OCI-LY7 (cell line): ENCODE measurements at regions of chr9 and their contacts with region 1.

Region 1: DNA sequence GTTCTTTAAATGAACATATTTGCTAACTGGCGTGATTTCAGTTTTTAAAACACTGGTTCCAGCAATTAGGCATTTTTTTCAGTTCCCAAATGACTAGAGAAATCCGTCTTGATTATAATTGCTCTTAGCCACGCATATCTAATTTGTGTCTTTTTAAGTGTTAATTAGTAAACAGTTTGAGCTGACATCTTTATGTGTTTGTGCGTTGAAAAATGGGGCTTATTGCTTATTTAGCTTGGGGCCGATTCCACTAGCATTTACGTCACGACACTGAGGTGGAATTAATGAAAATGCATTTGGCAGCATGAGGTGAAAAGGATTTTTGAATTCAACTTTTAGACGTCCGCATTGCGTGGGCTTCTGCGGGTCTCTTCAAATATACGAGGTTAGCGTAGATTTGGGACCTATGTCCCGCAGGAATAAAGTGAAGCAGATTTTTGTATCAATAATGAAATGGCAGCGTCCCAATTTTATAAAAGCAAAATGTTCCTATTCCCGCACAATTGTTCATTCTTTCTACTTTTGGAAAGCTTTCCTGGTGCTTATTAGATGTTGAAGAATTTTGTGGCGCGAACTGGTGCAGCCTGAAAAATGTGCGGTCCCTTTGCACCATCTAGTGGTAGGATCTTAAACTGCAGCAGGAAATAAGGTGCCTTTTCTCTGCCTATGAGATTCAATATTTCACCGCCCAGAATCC is 122.7 kb upstream of the LMX1B start:
- DNase-seq: peak; percentile 64
- H3K4me3 ChIP-seq: no peak overlapping the region
- H3K27ac ChIP-seq: no peak overlapping the region
- H3K4me1 ChIP-seq: no peaks in the 10 kb centered on the region
- CTCF ChIP-seq: peak; percentile 99

Region 2: DNA sequence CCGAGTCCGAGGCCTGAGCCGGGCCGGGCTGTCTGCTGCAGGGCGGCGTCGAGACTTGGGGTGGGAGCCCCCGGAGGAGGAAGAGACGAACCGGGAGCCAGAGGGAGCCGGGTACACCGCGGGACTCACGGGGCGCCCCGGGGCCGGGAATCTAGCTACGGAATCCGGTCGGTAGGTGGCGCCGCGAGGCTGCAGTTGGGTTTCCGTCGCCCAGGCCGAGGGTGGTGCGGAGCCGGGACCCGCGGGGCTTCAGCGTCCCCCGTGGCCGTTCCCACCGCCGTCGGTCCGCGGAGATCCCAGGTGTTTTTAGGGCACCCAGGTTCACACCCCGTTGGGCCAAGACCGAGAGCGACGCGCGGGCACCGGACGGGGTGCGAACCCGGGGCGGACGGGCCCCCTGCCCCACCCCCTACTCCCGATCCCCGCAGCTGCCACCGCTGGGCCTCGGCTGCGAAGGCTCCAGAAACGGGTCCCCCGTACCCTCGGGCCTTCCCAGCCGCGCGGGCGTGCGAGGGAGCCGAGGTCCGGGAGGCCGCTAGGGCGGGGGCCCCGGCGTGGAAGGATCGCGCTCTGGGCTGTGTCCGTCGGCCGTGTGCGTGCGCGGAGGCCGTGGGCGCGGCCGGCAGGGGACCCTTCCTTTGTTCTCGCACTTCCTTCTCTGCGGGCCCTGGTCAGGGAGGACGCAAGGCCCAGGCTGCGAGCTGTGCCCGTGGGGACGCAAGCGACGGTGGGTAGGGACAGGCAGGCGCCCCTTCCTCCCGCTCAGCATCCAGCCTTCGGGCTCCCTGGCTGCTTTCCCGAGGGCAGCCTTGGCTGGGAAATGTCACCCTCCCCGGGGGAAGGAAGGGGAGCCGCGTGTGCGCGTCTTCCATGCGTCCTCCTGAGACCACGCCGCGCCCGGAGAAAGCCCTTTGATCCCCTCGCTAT is 1082.8 kb before region 1 on chr9:
- CTCF ChIA-PET with region 1: no interaction called
- POLR2A ChIA-PET with region 1: no interaction called
- intact Hi-C with region 1: loop called (anchors 5 kb)
- DNase-seq: peak; percentile 84
- H3K4me3 ChIP-seq: peak overlapping the region; percentile 60
- H3K27ac ChIP-seq: no peak overlapping the region
- H3K4me1 ChIP-seq: peaks cover 21% of the 10 kb centered on the region
- CTCF ChIP-seq: peak; percentile 83

Region 3: DNA sequence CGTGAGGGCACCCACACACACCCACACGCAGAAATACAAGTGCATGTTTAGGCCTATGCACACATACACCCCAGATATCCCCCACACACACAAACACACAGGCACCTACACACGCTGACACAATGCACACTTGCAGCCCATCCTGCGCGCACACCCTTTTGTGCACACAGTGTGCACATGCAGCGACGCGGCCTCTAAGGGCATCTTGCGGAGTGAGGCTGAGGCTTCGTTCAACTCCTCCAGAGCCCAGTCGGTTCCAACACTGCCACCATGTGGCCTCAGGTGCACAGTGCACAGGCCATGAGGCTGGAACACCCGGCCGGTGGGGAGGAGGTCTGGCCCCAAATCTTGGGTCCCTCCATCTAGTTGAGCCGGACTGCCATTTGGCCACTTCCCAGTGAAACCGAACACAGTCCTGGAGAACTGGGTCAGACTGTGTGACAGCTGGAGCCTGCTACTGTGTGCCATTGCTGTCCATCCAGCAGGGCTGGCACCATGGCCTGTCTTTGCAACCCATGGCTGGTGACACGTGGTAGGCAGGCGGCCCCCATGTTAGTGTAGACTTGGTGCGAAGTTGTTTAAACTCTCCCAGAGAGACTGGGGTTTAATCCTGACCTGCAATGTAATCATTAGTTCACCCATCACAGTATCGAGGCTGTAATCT is 262.1 kb before region 1 on chr9:
- CTCF ChIA-PET with region 1: no interaction called
- POLR2A ChIA-PET with region 1: no interaction called
- intact Hi-C with region 1: loop called (anchors 5 kb)
- DNase-seq: peak; percentile 55
- H3K4me3 ChIP-seq: no peak overlapping the region
- H3K27ac ChIP-seq: no peak overlapping the region
- H3K4me1 ChIP-seq: no peaks in the 10 kb centered on the region
- CTCF ChIP-seq: peak; percentile 88

Region 4: GRCh38 chr9:126301985-126302603 is 188.9 kb before region 1 on chr9:
- CTCF ChIA-PET with region 1: no interaction called
- POLR2A ChIA-PET with region 1: no interaction called
- intact Hi-C with region 1: loop called (anchors 2 kb)
- DNase-seq: peak; percentile 44
- H3K4me3 ChIP-seq: no peak overlapping the region
- H3K27ac ChIP-seq: no peak overlapping the region
- H3K4me1 ChIP-seq: no peaks in the 10 kb centered on the region
- CTCF ChIP-seq: peak; percentile 78

Region 5: GRCh38 chr9:126317513-126317912 is 173.5 kb before region 1 on chr9:
- CTCF ChIA-PET with region 1: no interaction called
- POLR2A ChIA-PET with region 1: no interaction called
- intact Hi-C with region 1: loop called (anchors 5 kb)
- DNase-seq: no peak
- H3K4me3 ChIP-seq: no peak overlapping the region
- H3K27ac ChIP-seq: no peak overlapping the region
- H3K4me1 ChIP-seq: no peaks in the 10 kb centered on the region
- CTCF ChIP-seq: peak; percentile 53

Region 6: DNA sequence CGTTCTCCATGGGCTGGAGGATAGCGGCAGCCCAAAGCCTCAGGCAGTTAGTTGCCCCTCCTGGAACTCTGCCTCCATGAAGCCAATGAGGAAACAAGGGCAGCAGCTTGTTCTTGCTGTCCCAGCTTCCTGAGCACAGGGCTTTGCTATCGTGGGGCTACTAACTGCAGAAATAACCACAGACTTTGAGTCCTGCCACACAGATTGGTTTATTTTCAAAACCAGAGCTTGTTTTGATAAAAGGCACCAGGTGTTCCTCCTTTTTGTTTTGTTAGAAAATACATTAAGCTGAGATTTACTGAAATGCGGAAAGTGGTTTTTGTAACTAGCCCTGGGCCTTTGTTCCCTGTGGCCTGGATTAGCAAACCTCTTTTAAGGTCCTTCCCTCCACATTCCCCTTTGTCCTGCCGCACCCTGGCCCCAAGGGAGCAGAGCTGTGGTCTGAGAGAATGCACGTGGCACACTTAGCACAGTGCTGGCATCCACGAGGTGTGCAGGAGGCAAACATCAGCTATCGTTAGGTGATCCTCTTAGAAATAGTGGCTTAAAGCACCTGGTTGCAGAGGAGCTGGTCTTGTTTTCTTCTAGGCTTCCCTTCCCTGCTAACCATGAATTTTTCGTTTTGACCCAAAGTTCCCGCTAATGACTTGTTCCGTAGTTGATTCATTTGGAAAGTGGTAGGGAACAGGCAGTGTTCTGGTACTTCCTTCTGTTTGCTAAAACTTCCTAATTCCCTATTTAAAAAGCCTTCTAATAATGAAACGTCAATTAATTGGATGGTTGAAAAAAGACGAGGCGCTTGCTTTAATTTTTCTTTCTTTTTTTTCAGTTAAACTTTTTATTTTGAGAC is 142.9 kb before region 1 on chr9:
- CTCF ChIA-PET with region 1: no interaction called
- POLR2A ChIA-PET with region 1: no interaction called
- intact Hi-C with region 1: no loop called
- DNase-seq: peak; percentile 8
- H3K4me3 ChIP-seq: no peak overlapping the region
- H3K27ac ChIP-seq: no peak overlapping the region
- H3K4me1 ChIP-seq: peaks cover 7% of the 10 kb centered on the region
- CTCF ChIP-seq: no peak

Region 7: DNA sequence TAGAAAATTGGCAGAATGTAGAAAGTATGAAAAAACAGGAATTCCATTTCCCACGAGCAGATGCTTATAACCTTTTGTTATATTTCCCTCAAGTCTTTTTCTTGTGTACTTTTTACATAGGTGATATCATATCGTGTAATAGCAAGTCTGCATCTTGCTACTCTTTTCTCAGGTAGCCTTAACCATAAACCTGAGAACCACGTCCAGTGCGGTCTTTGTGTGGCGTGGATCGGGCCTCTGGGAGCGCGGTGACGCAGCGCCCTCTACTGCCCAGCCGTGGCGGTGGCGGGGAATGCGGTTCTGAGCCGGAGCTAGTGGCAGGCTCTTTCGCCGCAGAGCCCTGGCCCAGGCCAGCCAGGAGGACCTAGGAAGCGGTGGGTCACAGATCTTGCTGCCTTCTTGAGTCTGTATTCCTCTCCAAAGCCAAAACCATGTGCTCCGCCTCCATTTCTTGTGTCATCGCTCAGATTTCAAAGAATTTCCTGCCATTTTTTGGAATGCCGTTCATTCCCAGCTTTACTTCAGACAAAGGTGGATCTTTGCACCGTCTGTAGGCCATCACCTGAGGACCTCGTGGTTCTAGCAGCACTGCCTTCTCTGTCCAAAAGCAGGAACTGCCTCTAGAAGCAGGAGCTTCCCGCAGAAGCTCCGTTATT is 92.5 kb before region 1 on chr9:
- CTCF ChIA-PET with region 1: no interaction called
- POLR2A ChIA-PET with region 1: no interaction called
- intact Hi-C with region 1: loop called (anchors 2 kb)
- DNase-seq: peak; percentile 54
- H3K4me3 ChIP-seq: no peak overlapping the region
- H3K27ac ChIP-seq: no peak overlapping the region
- H3K4me1 ChIP-seq: no peaks in the 10 kb centered on the region
- CTCF ChIP-seq: peak; percentile 98

Region 8: GRCh38 chr9:126411225-126411947 is 79.6 kb before region 1 on chr9:
- CTCF ChIA-PET with region 1: no interaction called
- POLR2A ChIA-PET with region 1: no interaction called
- intact Hi-C with region 1: no loop called
- DNase-seq: peak; percentile 48
- H3K4me3 ChIP-seq: peak overlapping the region; percentile 48
- H3K27ac ChIP-seq: peak overlapping the region; percentile 41
- H3K4me1 ChIP-seq: peaks cover 18% of the 10 kb centered on the region
- CTCF ChIP-seq: no peak